Aorta (tissue), 5 donors: ENCODE measurements at regions of chr6 and their contacts with region 1.

Region 1: DNA sequence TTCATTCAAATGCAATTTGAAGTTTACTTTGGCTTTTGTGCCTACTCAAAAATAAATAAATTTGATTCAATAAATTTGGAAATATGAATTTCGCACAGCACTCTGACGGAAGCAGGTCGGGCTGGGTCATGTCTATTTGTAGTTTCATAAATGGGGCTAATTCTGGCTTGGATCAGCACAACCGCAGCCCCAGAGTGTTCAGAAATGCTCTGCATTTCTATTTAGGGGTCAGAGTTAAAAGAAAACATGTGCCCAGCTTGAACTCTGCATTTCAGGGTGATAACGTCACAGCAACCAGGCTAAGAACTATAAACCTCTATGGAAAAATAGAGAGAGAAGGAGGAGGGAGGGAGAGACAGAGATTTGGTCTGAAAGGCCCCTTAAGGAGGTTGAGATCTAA is 480.9 kb upstream of the NOX3 start:
- DNase-seq: peak; percentile 72 to 80
- ATAC-seq: peak; percentile 90
- H3K4me3 ChIP-seq: no peak overlapping the region
- H3K27ac ChIP-seq: no peak overlapping the region
- H3K4me1 ChIP-seq: peaks cover 0 to 3% of the 10 kb centered on the region in 2 donors
- H3K27me3 ChIP-seq: no peaks in the 10 kb centered on the region

Region 2: GRCh38 chr6:155985660-155986138 is 49.1 kb after region 1 on chr6:
- intact Hi-C with region 1: loop called in 1 of 2 experiments (anchors 5 kb)
- DNase-seq: no peak
- ATAC-seq: peak; percentile 78
- H3K4me3 ChIP-seq: no peak overlapping the region
- H3K27ac ChIP-seq: no peak overlapping the region
- H3K4me1 ChIP-seq: peaks cover 3 to 6% of the 10 kb centered on the region in 2 donors
- H3K27me3 ChIP-seq: no peaks in the 10 kb centered on the region